ENCODE measurements at regions of chr18 and their contacts with region 1.

Region 1: GRCh38 chr18:21997207-21998143 is 171.9 kb upstream of the GATA6 start:
- DNase-seq: no peak
- H3K4me3 ChIP-seq: no peak overlapping the region
- CTCF ChIP-seq: peak; percentile 61

Region 2: DNA sequence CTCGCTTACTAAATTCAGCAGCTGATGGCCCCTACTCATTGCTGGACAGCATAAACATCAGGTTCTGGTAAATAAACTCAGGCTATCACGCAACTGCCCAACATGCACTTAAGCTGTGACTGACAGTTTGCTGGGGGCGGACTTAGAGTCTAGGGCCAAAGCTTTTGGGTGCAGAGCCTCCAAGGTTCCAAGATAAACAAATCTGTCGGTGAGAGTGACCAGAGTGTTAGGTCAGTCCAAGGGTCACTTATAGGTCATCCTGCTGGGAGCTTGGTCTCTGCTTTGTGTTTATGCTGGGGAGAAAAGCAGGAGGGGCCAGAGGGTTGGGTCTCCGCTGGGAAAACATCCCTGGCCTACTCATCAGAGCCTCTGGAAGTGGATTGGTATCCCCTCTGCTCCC is 16.7 kb before region 1 on chr18:
- CTCF ChIA-PET with region 1: interaction called, 11 read pairs
- POLR2A ChIA-PET with region 1: no interaction called
- DNase-seq: no peak
- H3K4me3 ChIP-seq: no peak overlapping the region
- CTCF ChIP-seq: no peak

Region 3: DNA sequence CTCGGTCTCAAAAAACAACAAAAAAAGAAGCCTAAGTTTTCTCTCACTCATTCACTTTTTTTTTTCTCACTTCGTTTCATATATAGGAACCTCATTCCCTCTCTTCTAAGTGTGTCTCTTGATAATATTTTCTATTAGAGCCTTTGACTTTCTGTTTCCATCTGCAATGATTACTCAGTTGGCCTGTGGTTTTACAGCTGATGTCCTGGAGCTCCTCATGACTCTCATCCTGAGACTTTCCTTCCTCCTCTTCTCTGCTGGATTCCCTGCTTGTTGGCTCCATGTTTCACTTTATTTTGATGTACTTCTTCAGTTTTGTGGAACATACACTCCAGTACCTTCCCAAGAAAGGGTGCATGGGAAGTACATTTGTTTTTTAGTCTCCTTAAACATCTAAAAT is 17.7 kb after region 1 on chr18:
- CTCF ChIA-PET with region 1: interaction called, 41 read pairs
- POLR2A ChIA-PET with region 1: no interaction called
- DNase-seq: no peak
- H3K4me3 ChIP-seq: no peak overlapping the region
- CTCF ChIP-seq: no peak

Region 4: DNA sequence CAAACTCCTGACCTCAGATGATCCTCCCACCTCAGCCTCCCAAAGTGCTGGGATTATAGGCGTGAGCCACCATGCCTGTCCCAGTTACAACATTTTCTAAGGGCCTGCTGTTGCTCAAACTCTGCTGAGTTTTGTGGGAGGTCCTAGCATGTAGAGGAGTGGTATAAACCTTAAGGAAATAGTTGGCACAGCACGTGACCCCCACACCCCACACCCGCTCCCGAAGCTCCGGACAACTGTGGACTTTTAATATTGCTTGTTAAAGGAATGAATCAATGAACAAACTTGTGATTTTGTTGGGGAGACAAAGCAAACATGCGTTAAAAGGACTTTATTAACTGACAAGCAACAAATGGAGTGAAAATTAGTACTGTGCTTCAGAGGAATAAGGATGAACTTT is 34.1 kb after region 1 on chr18:
- CTCF ChIA-PET with region 1: interaction called, 10 read pairs
- POLR2A ChIA-PET with region 1: no interaction called
- DNase-seq: no peak
- H3K4me3 ChIP-seq: no peak overlapping the region
- CTCF ChIP-seq: no peak

Region 5: DNA sequence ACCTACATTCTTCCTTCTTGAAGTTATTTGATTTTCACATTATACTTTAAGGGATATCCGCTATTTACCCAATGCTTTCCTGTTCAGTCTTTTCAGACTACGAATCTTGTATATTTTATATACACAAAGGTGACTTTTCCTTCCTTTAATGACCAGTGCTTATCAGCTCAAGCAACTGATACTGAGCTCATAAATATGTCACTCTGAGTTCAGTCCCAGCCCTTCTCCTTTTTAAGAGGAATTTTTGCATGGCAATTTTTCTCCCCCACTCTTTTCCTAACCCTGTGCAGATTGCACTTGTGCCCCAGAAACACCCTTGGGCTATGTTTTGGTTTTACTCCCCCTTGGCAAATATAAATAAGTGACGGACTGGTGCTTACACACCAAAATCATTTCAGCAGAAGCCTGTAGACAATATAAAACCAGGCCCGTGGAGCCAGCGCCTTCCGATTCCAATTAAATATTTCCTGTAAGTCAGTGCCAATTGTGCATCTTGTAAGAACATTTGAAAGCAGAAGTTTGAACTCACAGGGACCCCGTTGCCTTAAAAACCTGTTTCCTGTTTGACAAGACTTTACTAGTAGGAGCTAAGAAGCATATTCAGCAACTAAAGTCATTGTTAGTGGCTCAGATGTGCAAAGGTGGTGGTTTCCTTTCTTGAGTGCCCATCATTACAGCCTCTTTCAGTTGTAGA is 105.6 kb after region 1 on chr18:
- CTCF ChIA-PET with region 1: no interaction called
- POLR2A ChIA-PET with region 1: no interaction called
- DNase-seq: no peak
- H3K4me3 ChIP-seq: no peak overlapping the region
- CTCF ChIP-seq: no peak

Region 6: DNA sequence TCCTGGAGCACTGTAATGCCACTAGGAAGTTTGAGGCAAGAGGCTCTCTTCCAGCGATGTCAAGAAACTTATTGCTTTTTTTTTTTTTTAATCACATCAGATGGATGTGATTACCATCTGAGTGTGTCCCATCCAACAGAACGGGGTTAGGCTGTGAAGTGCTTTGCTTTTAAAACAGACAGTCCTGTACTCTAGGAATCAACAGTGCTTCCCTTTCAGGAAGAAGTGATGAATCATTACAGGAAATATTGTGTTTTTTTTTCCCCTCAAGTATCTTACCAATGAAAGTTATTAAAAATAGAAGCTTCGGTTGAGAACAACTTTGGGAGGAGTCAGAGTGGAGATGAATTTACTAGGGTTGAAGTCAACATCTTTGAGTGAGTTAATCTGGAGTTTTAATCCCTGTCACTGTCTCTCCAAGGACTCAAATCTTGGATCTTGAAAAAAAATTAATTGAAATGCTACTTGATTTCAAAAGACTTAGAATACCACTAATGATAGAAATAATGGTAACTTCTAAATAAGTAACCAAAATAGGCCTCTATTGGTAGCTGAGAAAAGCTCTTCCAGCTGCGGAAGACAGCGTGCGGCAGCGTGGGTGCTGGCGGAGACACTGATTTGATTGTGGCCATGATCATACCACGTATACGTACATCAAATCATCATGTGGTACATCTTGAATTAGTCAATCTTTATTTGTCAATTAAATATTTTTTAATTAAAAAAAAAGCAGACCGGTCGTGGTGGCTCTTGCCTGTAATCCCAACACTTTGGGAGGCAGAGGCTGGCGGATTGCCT is 217.5 kb after region 1 on chr18:
- CTCF ChIA-PET with region 1: no interaction called
- POLR2A ChIA-PET with region 1: no interaction called
- DNase-seq: no peak
- H3K4me3 ChIP-seq: no peak overlapping the region
- CTCF ChIP-seq: no peak